GM12878 (cell line): ENCODE measurements at regions of chr9 and their contacts with region 1.

Region 1: GRCh38 chr9:73104342-73104741 is 47.3 kb upstream of the ANXA1 start:
- DNase-seq: no peak
- ATAC-seq: no peak
- H3K4me3 ChIP-seq: no peak overlapping the region
- H3K27ac ChIP-seq: no peak overlapping the region
- H3K4me1 ChIP-seq: no peaks in the 10 kb centered on the region
- H3K27me3 ChIP-seq: no peaks in the 10 kb centered on the region
- CTCF ChIP-seq: no peak
- EP300 ChIP-seq: no peak
- POLR2A ChIP-seq: no peak
- RAD21 ChIP-seq: no peak

Region 2: GRCh38 chr9:73093740-73094379 is 10.5 kb before region 1 on chr9:
- CTCF ChIA-PET with region 1: interaction called, 12 read pairs
- POLR2A ChIA-PET with region 1: no interaction called
- RAD21 ChIA-PET with region 1: interaction called, 6 read pairs
- SMC1A ChIA-PET with region 1: interaction called, 6 read pairs
- in situ Hi-C with region 1: no loop called
- intact Hi-C with region 1: no loop called
- DNase-seq: no peak
- ATAC-seq: no peak
- H3K4me3 ChIP-seq: no peak overlapping the region
- H3K27ac ChIP-seq: no peak overlapping the region
- H3K4me1 ChIP-seq: no peaks in the 10 kb centered on the region
- H3K27me3 ChIP-seq: no peaks in the 10 kb centered on the region
- CTCF ChIP-seq: no peak
- EP300 ChIP-seq: no peak
- POLR2A ChIP-seq: no peak
- RAD21 ChIP-seq: no peak

Region 3: GRCh38 chr9:73176450-73176875 is 72.1 kb after region 1 on chr9:
- CTCF ChIA-PET with region 1: interaction called, 174 read pairs
- POLR2A ChIA-PET with region 1: no interaction called
- RAD21 ChIA-PET with region 1: interaction called, 108 read pairs
- SMC1A ChIA-PET with region 1: interaction called, 46 read pairs
- in situ Hi-C with region 1: no loop called
- intact Hi-C with region 1: no loop called
- DNase-seq: no peak
- ATAC-seq: no peak
- H3K4me3 ChIP-seq: no peak overlapping the region
- H3K27ac ChIP-seq: no peak overlapping the region
- H3K4me1 ChIP-seq: peaks cover 4% of the 10 kb centered on the region; the same call in 1 of the 2 replicates
- H3K27me3 ChIP-seq: no peaks in the 10 kb centered on the region
- CTCF ChIP-seq: no peak
- EP300 ChIP-seq: no peak
- POLR2A ChIP-seq: no peak
- RAD21 ChIP-seq: no peak